AG04449 (cell line): ENCODE measurements at regions of chr3 and their contacts with region 1.

Region 1: GRCh38 chr3:72818092-72818773 is 30.0 kb downstream of the SHQ1 start:
- DNase-seq: no peak
- H3K4me3 ChIP-seq: no peak overlapping the region
- CTCF ChIP-seq: peak; percentile 55

Region 2: DNA sequence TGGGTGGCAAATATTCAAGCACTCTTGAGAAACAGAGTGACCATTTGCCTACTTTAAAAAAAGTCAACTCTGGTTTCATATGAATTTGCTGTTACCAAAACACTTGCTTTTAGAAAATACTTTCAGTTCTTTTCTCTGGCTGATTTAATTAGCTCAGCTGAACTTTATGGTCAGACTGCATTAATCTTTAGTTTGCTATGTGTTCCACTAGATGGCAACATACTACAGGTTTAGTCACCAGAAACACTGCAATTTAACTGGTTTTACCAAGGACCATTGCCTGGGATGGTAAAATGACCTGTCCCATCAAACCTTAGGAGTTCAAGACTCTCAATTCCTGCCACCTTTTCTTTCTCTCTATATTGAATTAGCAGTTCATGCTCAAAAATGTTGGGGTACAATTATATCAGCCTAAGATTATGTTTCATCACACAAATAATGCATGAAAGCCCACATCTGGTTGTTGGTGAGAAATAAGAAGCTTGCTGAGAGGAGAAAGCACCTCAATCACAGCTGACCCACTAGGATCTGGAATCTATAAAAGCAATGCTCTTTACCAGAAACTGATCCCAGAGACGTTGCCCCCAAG is 1107.2 kb before region 1 on chr3:
- CTCF ChIA-PET with region 1: interaction called, 21 read pairs
- POLR2A ChIA-PET with region 1: no interaction called
- DNase-seq: no peak
- H3K4me3 ChIP-seq: no peak overlapping the region
- CTCF ChIP-seq: peak; percentile 54

Region 3: GRCh38 chr3:71725279-71725991 is 1092.8 kb before region 1 on chr3 and contains the start of gene EIF4E3:
- CTCF ChIA-PET with region 1: interaction called, 71 read pairs
- POLR2A ChIA-PET with region 1: no interaction called
- DNase-seq: no peak
- H3K4me3 ChIP-seq: peak within 1 kb of the TSS; percentile 69
- CTCF ChIP-seq: no peak

Region 4: DNA sequence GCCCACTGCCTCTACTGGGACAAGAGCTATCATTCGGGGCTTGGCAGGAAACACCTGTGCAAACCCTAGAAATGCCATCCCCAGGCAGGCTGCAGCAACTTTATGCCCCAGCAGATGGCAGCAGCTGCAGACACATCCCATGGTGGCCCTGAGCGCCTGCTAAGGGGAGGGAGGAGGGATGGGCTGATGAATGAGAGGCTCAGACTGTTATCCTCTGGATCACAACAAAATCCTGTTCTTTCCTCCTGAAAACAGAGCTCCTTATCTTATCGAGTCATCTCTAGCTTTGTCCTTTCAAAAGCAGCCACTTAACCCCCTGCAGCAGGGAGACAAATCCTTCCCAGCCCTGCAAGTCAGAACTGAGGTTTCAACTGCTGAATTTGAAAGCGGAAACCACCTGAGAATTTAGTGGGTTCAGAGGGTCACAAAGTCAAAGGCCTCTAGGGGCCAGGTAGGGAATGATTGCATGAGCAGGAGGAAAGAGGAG is 942.7 kb before region 1 on chr3:
- CTCF ChIA-PET with region 1: interaction called, 230 read pairs
- POLR2A ChIA-PET with region 1: no interaction called
- DNase-seq: peak; percentile 2
- H3K4me3 ChIP-seq: no peak overlapping the region
- CTCF ChIP-seq: peak; percentile 95

Region 5: GRCh38 chr3:72665701-72666443 is 152.4 kb before region 1 on chr3:
- CTCF ChIA-PET with region 1: interaction called, 13 read pairs
- POLR2A ChIA-PET with region 1: no interaction called
- DNase-seq: no peak
- H3K4me3 ChIP-seq: no peak overlapping the region
- CTCF ChIP-seq: peak; percentile 23

Region 6: DNA sequence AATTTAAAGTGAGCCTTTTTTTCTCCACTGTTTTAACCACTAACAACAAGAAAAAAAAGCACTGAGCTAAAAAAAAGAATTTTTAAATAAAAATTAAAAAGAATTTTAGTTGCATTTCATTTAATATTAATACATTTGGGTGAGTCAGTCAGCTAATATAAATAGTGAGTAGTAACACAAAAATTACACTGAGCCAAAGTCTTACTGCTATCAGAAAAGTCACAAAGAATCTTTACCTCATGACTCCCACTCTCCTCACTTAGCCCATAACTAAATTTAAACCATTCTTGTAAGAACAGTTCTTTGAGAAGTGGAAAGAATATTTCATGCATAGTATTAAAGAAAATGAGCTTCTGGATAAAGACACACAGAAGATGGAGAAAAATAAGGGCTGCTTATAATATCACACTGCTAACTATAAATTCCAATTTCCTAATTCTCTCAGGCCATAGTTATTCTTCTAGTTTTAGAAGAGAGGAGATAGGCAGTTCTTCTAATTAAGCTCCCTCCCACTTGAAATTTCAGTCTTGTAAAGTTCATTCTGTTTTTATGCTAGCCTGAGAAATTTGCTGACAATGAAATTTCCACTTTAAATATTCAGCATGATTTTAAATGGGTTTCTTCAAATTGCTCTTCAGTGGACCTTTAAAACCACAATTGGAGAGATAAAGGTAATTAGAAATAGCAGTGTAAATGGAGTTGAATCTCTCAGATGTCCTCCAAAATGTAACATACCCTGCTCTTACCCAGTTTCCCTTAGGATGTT is 12.4 kb after region 1 on chr3:
- CTCF ChIA-PET with region 1: interaction called, 10 read pairs
- POLR2A ChIA-PET with region 1: no interaction called
- DNase-seq: no peak
- H3K4me3 ChIP-seq: no peak overlapping the region
- CTCF ChIP-seq: no peak

Region 7: GRCh38 chr3:72924055-72924454 is 105.8 kb after region 1 on chr3:
- CTCF ChIA-PET with region 1: no interaction called
- POLR2A ChIA-PET with region 1: no interaction called
- DNase-seq: no peak
- H3K4me3 ChIP-seq: no peak overlapping the region
- CTCF ChIP-seq: no peak